BJ (cell line): ENCODE measurements at regions of chr13 and their contacts with region 1.

Region 1: GRCh38 chr13:40243982-40244381 is 422.5 kb downstream of the FOXO1 start:
- DNase-seq: no peak
- H3K4me3 ChIP-seq: no peak overlapping the region
- H3K27me3 ChIP-seq: 0 out of 2 replicates have a peak, but pooled peaks cover 1% of the 10 kb centered on the region
- CTCF ChIP-seq: no peak

Region 2: GRCh38 chr13:39956036-39956435 is 287.9 kb before region 1 on chr13:
- CTCF ChIA-PET with region 1: no interaction called
- POLR2A ChIA-PET with region 1: no interaction called
- DNase-seq: no peak
- H3K4me3 ChIP-seq: no peak overlapping the region
- H3K27me3 ChIP-seq: no peaks in the 10 kb centered on the region
- CTCF ChIP-seq: no peak

Region 3: GRCh38 chr13:40230833-40231266 is 13.1 kb before region 1 on chr13:
- CTCF ChIA-PET with region 1: interaction called, 4 read pairs
- POLR2A ChIA-PET with region 1: interaction called, 17 read pairs
- DNase-seq: no peak
- H3K4me3 ChIP-seq: no peak overlapping the region
- H3K27me3 ChIP-seq: no peaks in the 10 kb centered on the region
- CTCF ChIP-seq: no peak